AG04450 (cell line): ENCODE measurements at regions of chr5 and their contacts with region 1.

Region 1: GRCh38 chr5:73902327-73903051 is 276.5 kb downstream of the ARHGEF28 start:
- DNase-seq: no peak
- H3K4me3 ChIP-seq: no peak overlapping the region
- H3K27ac ChIP-seq: no peak overlapping the region
- H3K27me3 ChIP-seq: no peaks in the 10 kb centered on the region
- CTCF ChIP-seq: peak; percentile 66

Region 2: DNA sequence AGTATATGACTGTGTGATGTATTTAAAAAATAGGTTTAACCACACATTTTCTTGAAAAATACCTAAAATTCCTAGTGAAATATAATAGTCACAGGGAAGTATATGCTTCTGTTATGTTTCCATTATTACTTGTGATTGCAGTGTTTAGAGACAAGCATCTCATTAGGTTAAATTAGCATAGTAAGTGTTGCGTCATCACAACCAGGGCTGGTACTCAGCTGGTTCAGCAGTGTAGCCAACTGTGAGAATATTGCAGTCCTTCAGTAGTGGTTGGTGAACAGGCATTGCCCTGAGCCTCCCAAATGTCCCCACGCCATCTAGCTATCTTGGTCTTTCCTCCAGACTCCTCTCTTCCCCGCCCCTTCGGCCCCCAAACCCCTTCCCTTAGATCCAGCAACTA is 14.8 kb before region 1 on chr5:
- CTCF ChIA-PET with region 1: interaction called, 16 read pairs
- POLR2A ChIA-PET with region 1: no interaction called
- DNase-seq: no peak
- H3K4me3 ChIP-seq: no peak overlapping the region
- H3K27ac ChIP-seq: no peak overlapping the region
- H3K27me3 ChIP-seq: no peaks in the 10 kb centered on the region
- CTCF ChIP-seq: no peak

Region 3: GRCh38 chr5:74075501-74076436 is 173.3 kb after region 1 on chr5:
- CTCF ChIA-PET with region 1: no interaction called
- POLR2A ChIA-PET with region 1: no interaction called
- DNase-seq: no peak
- H3K4me3 ChIP-seq: no peak overlapping the region
- H3K27ac ChIP-seq: no peak overlapping the region
- H3K27me3 ChIP-seq: no peaks in the 10 kb centered on the region
- CTCF ChIP-seq: no peak

Region 4: DNA sequence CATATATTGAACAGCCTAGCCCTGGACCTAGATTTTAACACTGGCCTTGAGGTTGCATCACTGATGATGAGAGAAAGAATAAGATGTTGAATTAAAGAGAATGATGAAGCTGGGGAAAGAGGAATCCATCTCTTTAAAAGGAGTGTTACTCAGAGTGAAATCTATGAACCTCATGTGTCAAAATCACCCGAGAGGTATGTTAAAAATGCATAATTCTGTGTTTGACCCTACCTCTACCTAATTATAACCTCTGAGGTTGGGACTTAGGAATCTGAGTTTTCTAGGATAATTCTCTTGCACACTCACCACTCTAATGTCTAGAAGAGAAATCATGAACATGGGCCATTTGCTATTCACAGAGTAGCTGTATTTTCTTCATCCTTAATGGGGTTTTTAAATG is 258.7 kb after region 1 on chr5:
- CTCF ChIA-PET with region 1: no interaction called
- POLR2A ChIA-PET with region 1: no interaction called
- DNase-seq: no peak
- H3K4me3 ChIP-seq: no peak overlapping the region
- H3K27ac ChIP-seq: no peak overlapping the region
- H3K27me3 ChIP-seq: no peaks in the 10 kb centered on the region
- CTCF ChIP-seq: no peak

Region 5: DNA sequence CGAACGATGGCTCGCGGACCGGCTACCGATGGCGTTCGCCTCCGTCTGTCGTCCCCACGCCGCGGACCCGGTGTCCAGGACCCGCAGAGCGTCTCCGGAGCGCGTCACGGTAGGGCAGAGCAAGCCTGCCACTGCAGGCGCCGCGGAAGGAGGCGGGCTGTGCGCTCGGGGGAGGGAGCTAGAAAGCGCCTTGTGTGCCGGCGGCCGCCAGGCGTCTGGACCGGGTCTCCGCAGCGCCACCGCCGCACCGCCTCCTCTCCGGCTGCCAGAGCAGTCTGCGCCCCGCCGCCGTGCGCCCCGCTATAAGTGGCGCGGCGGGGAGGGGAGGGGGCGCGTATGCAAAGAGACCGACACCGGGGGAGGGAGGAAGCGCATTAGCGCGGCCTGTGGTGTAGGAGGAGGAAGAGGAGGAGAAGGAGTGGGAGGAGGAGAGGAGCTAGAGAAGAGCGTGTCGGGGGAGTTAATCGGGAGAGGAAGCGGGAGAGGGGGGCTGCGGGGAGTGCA is 738.0 kb after region 1 on chr5 and contains the start of gene ENC1:
- CTCF ChIA-PET with region 1: interaction called, 76 read pairs
- POLR2A ChIA-PET with region 1: interaction called, 3 read pairs
- DNase-seq: peak; percentile 42
- H3K4me3 ChIP-seq: peak within 1 kb of the TSS; percentile 93
- H3K27ac ChIP-seq: peak within 1 kb of the TSS; percentile 75
- H3K27me3 ChIP-seq: no peaks in the 10 kb centered on the region
- CTCF ChIP-seq: peak; percentile 57
- polyA plus RNA-seq, gene ENC1: 19.3 and 23.1 TPM in 2 replicates

Region 6: GRCh38 chr5:74648835-74649293 is 746.4 kb after region 1 on chr5:
- CTCF ChIA-PET with region 1: interaction called, 76 read pairs
- POLR2A ChIA-PET with region 1: no interaction called
- DNase-seq: no peak
- H3K4me3 ChIP-seq: no peak overlapping the region
- H3K27ac ChIP-seq: no peak overlapping the region
- H3K27me3 ChIP-seq: no peaks in the 10 kb centered on the region
- CTCF ChIP-seq: peak; percentile 71

Region 7: GRCh38 chr5:74660140-74660539 is 757.7 kb after region 1 on chr5:
- CTCF ChIA-PET with region 1: interaction called, 16 read pairs
- POLR2A ChIA-PET with region 1: no interaction called
- DNase-seq: no peak
- H3K4me3 ChIP-seq: no peak overlapping the region
- H3K27ac ChIP-seq: no peak overlapping the region
- H3K27me3 ChIP-seq: no peaks in the 10 kb centered on the region
- CTCF ChIP-seq: no peak